GM12878 (cell line): ENCODE measurements at regions of chr1 and their contacts with region 1.

Region 1: GRCh38 chr1:31027693-31028526 is 37.6 kb downstream of the PUM1 start:
- DNase-seq: no peak
- ATAC-seq: peak; percentile 81
- H3K4me3 ChIP-seq: 0 out of 2 replicates have a peak overlapping the region, but pooled peaks have one; percentile 5
- H3K27ac ChIP-seq: peak overlapping the region; percentile 40; the same call in 1 of the 2 replicates
- H3K4me1 ChIP-seq: peaks cover 20% of the 10 kb centered on the region
- H3K27me3 ChIP-seq: no peaks in the 10 kb centered on the region
- CTCF ChIP-seq: no peak
- EP300 ChIP-seq: no peak
- POLR2A ChIP-seq: no peak
- RAD21 ChIP-seq: no peak

Region 2: GRCh38 chr1:30675761-30676160 is 352.1 kb before region 1 on chr1:
- CTCF ChIA-PET with region 1: no interaction called
- POLR2A ChIA-PET with region 1: no interaction called
- RAD21 ChIA-PET with region 1: no interaction called
- SMC1A ChIA-PET with region 1: no interaction called
- in situ Hi-C with region 1: no loop called
- intact Hi-C with region 1: no loop called
- DNase-seq: no peak
- ATAC-seq: no peak
- H3K4me3 ChIP-seq: no peak overlapping the region
- H3K27ac ChIP-seq: no peak overlapping the region
- H3K4me1 ChIP-seq: no peaks in the 10 kb centered on the region
- H3K27me3 ChIP-seq: no peaks in the 10 kb centered on the region; a peak in 1 of 4 replicates
- CTCF ChIP-seq: no peak
- EP300 ChIP-seq: no peak
- POLR2A ChIP-seq: no peak
- RAD21 ChIP-seq: no peak

Region 3: GRCh38 chr1:30955448-30956015 is 72.4 kb before region 1 on chr1:
- CTCF ChIA-PET with region 1: no interaction called
- POLR2A ChIA-PET with region 1: interaction called, 10 read pairs
- RAD21 ChIA-PET with region 1: no interaction called
- SMC1A ChIA-PET with region 1: no interaction called
- in situ Hi-C with region 1: no loop called
- intact Hi-C with region 1: no loop called
- DNase-seq: no peak
- ATAC-seq: no peak
- H3K4me3 ChIP-seq: no peak overlapping the region
- H3K27ac ChIP-seq: no peak overlapping the region
- H3K4me1 ChIP-seq: no peaks in the 10 kb centered on the region
- H3K27me3 ChIP-seq: no peaks in the 10 kb centered on the region
- CTCF ChIP-seq: no peak
- EP300 ChIP-seq: no peak
- POLR2A ChIP-seq: no peak
- RAD21 ChIP-seq: no peak